Activated T-helper 2 cell treated with anti-CD3 and anti-CD28 coated beads, Interferon-gamma antibody, Interleukin-2, Interleukin-4, amounts not matched to agents 10 μg/mL and 5 μg/mL and 100 μg/mL, durations not matched to agents 14 hours and 24 hours and 36 hours (primary cell): ENCODE measurements at regions of chr20 and their contacts with region 1.

Region 1: DNA sequence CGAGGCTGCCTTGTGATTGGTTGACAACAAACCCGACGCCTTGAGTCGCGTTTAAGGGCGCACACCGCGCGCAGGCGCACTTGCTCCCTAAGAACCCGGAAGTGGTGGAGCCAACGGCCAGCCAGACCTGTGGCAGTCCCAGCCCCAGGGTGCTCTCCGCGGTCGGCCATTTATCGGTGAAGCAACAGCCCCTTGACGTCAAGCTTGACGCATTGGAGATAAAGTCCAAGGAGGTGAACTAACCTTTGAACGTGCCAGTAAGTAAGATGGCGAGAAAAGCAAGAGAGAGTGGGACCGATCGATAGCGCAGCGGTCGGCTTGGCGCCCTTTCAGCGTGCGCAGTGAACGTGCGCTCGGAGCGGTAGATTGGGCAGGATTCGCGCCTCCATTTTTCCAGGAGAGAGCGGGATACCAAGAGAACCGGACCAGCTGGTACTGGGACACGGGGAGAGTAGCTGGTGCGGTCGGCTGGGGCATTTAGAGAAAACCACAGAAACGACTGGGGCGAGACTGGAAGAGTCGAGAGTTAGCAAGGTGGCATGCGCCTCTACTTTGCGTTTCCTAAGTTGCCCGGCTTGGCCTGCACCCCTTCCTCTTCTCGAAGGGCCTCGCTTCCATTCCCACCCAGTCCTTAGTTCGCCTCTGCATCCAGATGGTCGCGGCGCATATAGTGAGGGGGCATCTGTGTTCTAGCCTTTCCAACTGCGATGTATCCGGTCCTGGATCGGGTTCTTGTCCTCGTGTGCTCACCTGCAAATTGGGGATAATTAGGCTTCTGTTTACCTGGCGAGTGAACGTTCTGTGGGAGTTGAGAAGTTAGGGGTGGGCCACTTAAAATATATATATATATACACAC is at the start of gene CSTF1:
- DNase-seq: peak; percentile 100
- H3K4me3 Mint-ChIP-seq: no peak within 1 kb of the TSS
- H3K27ac Mint-ChIP-seq: no peak within 1 kb of the TSS
- H3K4me1 Mint-ChIP-seq: peaks cover 40% of the 10 kb centered on the region
- H3K27me3 Mint-ChIP-seq: no peaks in the 10 kb centered on the region
- total RNA-seq, gene CSTF1: 51.2 and 52.1 TPM in 2 replicates

Region 2: DNA sequence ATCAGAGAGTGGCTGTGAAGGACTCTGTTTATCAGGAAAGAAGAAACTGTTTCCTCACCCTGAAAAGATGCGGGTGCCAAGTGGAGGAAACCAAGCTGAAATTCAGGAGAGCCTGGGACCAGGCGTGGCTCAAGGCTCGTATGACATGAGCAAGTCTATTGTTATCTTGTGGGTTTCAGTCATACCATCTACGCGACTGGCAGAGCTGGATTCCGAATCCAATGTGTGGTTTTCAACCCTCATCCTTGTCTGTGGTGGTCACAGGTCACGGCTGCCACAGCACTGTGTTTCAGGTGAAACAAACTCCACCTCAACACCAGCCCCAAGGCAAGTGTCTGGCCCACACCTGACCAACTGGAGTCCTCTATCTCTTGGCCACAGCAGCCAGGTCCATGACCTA is 134.9 kb before region 1 on chr20:
- intact Hi-C with region 1: no loop called
- DNase-seq: no peak
- H3K4me3 Mint-ChIP-seq: no peak overlapping the region
- H3K27ac Mint-ChIP-seq: no peak overlapping the region
- H3K4me1 Mint-ChIP-seq: no peaks in the 10 kb centered on the region
- H3K27me3 Mint-ChIP-seq: peaks cover 2% of the 10 kb centered on the region

Region 3: DNA sequence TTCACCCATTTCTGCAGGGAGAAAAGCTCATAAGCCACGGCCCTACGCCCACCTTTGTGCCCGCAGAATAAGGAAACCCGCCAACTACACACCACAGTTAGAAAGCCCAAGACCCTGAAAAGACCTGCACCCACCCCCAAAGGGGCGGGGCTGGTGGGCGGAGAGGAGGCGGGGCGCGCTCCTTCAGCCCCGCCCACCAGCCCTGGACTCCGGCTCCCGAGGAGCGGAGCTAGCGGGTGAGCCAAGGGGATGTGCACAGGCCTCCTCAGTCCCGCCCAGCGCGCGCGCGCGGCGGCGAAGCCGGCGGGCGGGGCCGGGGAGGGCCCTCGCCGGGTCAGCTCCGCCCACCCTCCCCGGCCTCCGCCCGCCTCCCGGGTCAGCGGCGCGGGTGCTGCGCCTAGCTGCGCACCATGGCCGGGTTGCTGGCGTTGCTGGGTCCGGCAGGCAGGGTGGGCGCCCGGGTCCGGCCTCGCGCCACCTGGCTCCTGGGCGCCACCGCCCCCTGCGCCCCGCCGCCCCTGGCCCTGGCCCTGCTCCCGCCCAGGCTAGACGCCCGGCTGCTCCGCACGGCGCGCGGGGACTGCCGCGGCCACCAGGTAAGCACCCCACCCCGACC is 33.8 kb before region 1 on chr20 and contains the start of gene FAM210B:
- intact Hi-C with region 1: loop called (anchors 1 kb)
- DNase-seq: peak; percentile 74
- H3K4me3 Mint-ChIP-seq: peak within 1 kb of the TSS; percentile 86
- H3K27ac Mint-ChIP-seq: peak within 1 kb of the TSS; percentile 63
- H3K4me1 Mint-ChIP-seq: peaks cover 10% of the 10 kb centered on the region
- H3K27me3 Mint-ChIP-seq: peaks cover 10% of the 10 kb centered on the region
- total RNA-seq, gene FAM210B: 9.2 TPM in 2 replicates

Region 4: DNA sequence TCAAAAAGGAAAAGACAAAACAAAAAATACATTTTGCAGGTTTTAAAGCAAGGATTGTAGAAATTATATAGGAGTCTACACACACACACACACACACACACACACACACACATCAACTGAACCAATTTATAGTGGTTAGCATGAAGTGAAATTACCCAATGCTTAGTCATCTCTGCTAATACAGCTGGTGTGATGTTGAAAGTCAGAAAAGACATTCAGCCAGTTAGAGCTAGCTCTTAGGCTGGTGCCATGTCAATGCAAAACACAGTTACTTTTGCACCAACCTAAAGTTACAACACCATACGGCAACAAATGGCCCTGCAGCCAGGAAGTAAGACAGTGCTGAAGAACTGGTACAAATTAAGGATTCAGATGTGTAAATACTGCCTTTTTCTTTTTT is 18.6 kb before region 1 on chr20:
- intact Hi-C with region 1: loop called (anchors 2 kb)
- DNase-seq: no peak
- H3K4me3 Mint-ChIP-seq: no peak overlapping the region
- H3K27ac Mint-ChIP-seq: no peak overlapping the region
- H3K4me1 Mint-ChIP-seq: peaks cover 51% of the 10 kb centered on the region
- H3K27me3 Mint-ChIP-seq: no peaks in the 10 kb centered on the region

Region 5: GRCh38 chr20:56468316-56469082 is 76.0 kb after region 1 on chr20 and contains the start of gene RTF2:
- intact Hi-C with region 1: loop called (anchors 1 kb)
- DNase-seq: peak; percentile 95
- H3K4me3 Mint-ChIP-seq: peak within 1 kb of the TSS; percentile 99
- H3K27ac Mint-ChIP-seq: peak within 1 kb of the TSS; percentile 97
- H3K4me1 Mint-ChIP-seq: peaks cover 36% of the 10 kb centered on the region
- H3K27me3 Mint-ChIP-seq: no peaks in the 10 kb centered on the region
- total RNA-seq, gene RTF2: 103 and 107 TPM in 2 replicates